PC-9 (cell line): ENCODE measurements at regions of chr2 and their contacts with region 1.

Region 1: GRCh38 chr2:51120754-51121280 is 88.9 kb upstream of the NRXN1 start:
- DNase-seq: no peak
- H3K4me3 ChIP-seq: no peak overlapping the region
- H3K27ac ChIP-seq: no peak overlapping the region
- H3K4me1 ChIP-seq: no peaks in the 10 kb centered on the region
- H3K27me3 ChIP-seq: no peaks in the 10 kb centered on the region
- CTCF ChIP-seq: no peak

Region 2: DNA sequence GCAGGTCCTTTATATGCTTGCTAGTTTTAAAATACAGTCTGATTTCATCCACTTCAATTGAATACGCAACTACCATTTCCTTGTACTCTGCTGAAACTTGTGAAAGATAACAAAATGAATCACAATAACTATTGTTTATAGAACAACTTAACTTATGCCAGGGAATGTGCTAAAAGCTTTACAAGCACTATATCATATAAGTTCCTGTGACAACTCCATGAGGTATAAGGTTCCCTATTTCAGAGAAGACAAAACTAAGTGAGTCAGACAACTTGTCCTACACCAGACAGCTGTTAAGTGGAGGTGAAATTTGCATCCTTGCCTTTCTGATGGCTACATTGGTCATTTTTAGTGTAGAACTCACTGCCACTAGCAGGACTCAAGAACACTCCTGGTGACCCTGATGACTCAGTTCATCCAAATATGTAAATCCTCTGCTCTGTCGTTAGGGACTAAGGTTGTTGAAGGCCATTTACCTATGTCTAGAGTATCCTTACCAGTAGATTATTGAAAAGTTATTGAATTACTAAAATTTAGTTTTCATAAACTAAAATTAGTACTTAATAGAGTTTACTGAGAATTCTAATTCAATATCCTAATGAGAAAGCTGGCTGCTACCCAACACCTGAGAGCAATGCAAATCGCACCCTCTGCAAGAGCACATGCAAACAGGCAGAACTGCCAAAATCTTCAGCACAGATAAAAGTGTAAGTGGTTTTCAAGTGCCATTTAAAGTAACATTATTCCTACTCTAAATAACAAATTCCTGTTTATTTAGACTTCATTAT is 725.1 kb before region 1 on chr2:
- CTCF ChIA-PET with region 1: no interaction called
- POLR2A ChIA-PET with region 1: no interaction called
- intact Hi-C with region 1: no loop called
- DNase-seq: no peak
- H3K4me3 ChIP-seq: no peak overlapping the region
- H3K27ac ChIP-seq: no peak overlapping the region
- H3K4me1 ChIP-seq: no peaks in the 10 kb centered on the region
- H3K27me3 ChIP-seq: no peaks in the 10 kb centered on the region
- CTCF ChIP-seq: no peak

Region 3: GRCh38 chr2:50529600-50530218 is 591.1 kb before region 1 on chr2:
- CTCF ChIA-PET with region 1: no interaction called
- POLR2A ChIA-PET with region 1: no interaction called
- intact Hi-C with region 1: loop called (anchors 10 kb)
- DNase-seq: peak in 1 of 2 experiments; percentile 56
- H3K4me3 ChIP-seq: no peak overlapping the region
- H3K27ac ChIP-seq: no peak overlapping the region
- H3K4me1 ChIP-seq: no peaks in the 10 kb centered on the region
- H3K27me3 ChIP-seq: no peaks in the 10 kb centered on the region
- CTCF ChIP-seq: peak; percentile 92